Activated CD4-positive, alpha-beta T cell treated with anti-CD3 and anti-CD28 coated beads, Interleukin-2, amount 10 ng/mL, durations not matched to agents 24 days and 14 days (primary cell): ENCODE measurements at regions of chr7 and their contacts with region 1.

Region 1: DNA sequence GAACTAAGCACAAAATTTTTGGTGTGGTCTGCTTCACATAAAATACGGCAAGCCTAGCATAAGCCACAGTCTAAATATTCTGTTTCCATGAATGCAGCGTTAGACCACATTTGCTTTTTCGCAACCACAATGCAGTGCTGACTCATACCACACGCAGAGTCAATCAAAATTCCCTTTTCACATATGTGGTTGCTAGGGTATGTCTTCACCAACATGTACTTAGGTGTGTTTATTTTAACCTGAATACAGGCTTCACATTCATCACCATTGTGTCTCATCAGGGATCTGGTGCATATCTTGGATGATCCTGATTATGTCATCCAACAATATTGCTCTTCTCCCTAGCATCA is 90.8 kb downstream of the CHN2 start:
- DNase-seq: peak; percentile 82
- H3K4me3 Mint-ChIP-seq: no peak overlapping the region
- H3K27ac Mint-ChIP-seq: peak overlapping the region; percentile 32
- H3K4me1 Mint-ChIP-seq: peaks cover 14% of the 10 kb centered on the region
- H3K27me3 Mint-ChIP-seq: peaks cover 52% of the 10 kb centered on the region

Region 2: GRCh38 chr7:29194594-29195427 is 90.6 kb before region 1 on chr7 and contains the start of gene CHN2:
- intact Hi-C with region 1: loop called (anchors 5 kb)
- DNase-seq: peak; percentile 81
- H3K4me3 Mint-ChIP-seq: peak within 1 kb of the TSS; percentile 75
- H3K27ac Mint-ChIP-seq: no peak within 1 kb of the TSS
- H3K4me1 Mint-ChIP-seq: peaks cover 15% of the 10 kb centered on the region
- H3K27me3 Mint-ChIP-seq: peaks cover 74% of the 10 kb centered on the region
- total RNA-seq, gene CHN2: 0.33 TPM in 1 of 2 replicates, not detected in the other

Region 3: GRCh38 chr7:29239638-29240037 is 45.8 kb before region 1 on chr7:
- intact Hi-C with region 1: loop called (anchors 1 kb)
- DNase-seq: peak; percentile 65
- H3K4me3 Mint-ChIP-seq: no peak overlapping the region
- H3K27ac Mint-ChIP-seq: no peak overlapping the region
- H3K4me1 Mint-ChIP-seq: peaks cover 13% of the 10 kb centered on the region
- H3K27me3 Mint-ChIP-seq: peaks cover 27% of the 10 kb centered on the region

Region 4: DNA sequence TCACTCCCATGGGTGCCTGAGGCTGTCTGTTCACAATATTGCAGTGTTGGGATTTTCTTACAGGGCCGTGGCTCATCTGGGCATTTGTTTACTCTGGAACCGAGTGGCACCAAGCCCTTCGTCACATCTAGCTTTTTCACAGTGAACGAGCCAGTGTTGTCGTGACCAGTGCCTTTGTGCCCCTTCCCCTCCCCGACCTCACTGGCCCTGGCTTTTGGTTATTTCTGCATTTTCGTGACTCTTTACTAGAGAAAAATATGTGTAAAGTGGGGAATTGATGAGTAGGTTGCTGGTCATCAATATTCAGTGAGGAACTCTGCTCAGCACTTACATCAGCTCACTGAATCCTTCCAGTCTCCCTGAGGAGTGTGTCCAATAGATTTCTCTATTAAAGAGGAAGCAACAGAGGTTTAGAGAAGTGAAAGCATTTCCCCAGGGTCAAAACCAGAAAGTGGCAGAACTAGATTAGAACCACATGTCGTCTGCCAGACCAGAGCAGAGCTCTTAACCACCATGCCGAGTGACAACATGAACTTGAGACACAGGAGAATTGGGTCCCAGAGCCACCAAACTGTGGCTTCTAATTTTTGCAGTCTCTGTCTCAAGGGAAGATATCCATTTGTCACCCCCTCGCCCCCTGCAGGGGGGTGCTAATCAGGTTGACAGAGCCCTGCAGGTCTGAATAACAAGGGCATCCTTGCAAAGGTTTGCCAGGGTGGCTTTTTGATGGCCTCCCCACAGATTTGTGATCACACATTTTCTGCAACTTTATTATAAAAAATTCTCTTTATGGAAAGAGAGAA is 34.5 kb after region 1 on chr7:
- intact Hi-C with region 1: no loop called
- DNase-seq: no peak
- H3K4me3 Mint-ChIP-seq: no peak overlapping the region
- H3K27ac Mint-ChIP-seq: no peak overlapping the region
- H3K4me1 Mint-ChIP-seq: no peaks in the 10 kb centered on the region
- H3K27me3 Mint-ChIP-seq: peaks cover 1% of the 10 kb centered on the region